Body of pancreas (tissue), 4 donors: ENCODE measurements at regions of chr5 and their contacts with region 1.

Region 1: GRCh38 chr5:115586601-115587048 is 15.7 kb downstream of the TICAM2 start:
- DNase-seq: no peak
- ATAC-seq: no peak
- H3K4me3 ChIP-seq: no peak overlapping the region
- H3K27ac ChIP-seq: no peak overlapping the region
- H3K4me1 ChIP-seq: peaks cover 7% of the 10 kb centered on the region
- H3K27me3 ChIP-seq: no peaks in the 10 kb centered on the region
- CTCF ChIP-seq: peak; percentile 16 to 64 (median 52)
- POLR2A ChIP-seq: no peak

Region 2: DNA sequence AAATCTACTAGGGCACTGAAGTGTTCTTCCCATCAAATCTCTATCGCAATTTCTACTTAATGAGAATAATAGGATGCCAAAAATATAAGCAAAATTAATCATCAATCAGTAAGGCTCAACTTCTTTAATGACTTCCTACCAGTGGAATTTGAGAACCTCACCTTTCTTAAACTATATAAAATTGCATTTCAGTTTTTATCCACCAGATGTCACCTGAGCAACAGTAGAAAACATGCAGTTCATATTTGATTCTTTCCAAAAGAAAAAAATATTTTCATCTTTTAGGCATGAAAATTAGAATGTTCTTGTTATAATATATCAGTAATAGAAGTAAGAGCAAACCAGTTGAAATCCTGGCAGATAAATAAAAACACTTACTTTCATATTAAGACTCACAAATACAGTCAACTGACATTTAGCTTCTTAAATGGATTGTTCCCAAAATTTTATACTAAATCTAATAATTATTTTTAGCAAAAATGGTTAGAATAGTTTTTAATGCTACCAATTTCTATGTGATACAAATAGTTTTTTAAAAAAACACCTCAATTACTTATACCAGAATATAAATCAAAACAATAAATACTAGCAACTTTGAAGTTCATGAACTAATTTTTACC is 276.8 kb before region 1 on chr5:
- intact Hi-C with region 1: loop called (anchors 5 kb)
- DNase-seq: no peak
- ATAC-seq: peak; percentile 62
- H3K4me3 ChIP-seq: no peak overlapping the region
- H3K27ac ChIP-seq: no peak overlapping the region
- H3K4me1 ChIP-seq: no peaks in the 10 kb centered on the region
- H3K27me3 ChIP-seq: no peaks in the 10 kb centered on the region
- CTCF ChIP-seq: peak in 6 of 7 experiments; percentile 55 to 81 (median 77)
- POLR2A ChIP-seq: no peak

Region 3: DNA sequence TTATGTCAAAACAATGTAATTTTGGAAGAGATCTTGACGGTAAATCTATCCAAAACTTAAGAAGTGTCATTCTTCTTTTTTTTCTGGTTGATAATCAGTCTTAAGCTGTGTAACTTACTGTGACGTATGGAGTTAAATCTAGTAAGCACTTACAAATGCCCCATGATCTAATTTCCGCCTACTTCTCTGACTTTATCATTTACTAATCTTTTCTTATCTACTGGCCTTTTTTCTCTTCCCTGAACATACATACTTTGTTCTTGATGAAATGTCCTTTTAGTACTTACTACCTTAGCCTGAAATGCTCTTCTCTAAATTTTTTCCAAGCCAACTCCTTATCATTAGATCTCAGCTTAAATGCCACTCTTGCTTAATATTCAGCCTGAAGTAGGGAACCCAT is 282.6 kb after region 1 on chr5:
- intact Hi-C with region 1: no loop called
- DNase-seq: no peak
- ATAC-seq: no peak
- H3K4me3 ChIP-seq: no peak overlapping the region
- H3K27ac ChIP-seq: no peak overlapping the region
- H3K4me1 ChIP-seq: peaks cover 7% of the 10 kb centered on the region
- H3K27me3 ChIP-seq: no peaks in the 10 kb centered on the region
- CTCF ChIP-seq: no peak
- POLR2A ChIP-seq: no peak